ENCODE measurements at regions of chr5 and their contacts with region 1.

Region 1: DNA sequence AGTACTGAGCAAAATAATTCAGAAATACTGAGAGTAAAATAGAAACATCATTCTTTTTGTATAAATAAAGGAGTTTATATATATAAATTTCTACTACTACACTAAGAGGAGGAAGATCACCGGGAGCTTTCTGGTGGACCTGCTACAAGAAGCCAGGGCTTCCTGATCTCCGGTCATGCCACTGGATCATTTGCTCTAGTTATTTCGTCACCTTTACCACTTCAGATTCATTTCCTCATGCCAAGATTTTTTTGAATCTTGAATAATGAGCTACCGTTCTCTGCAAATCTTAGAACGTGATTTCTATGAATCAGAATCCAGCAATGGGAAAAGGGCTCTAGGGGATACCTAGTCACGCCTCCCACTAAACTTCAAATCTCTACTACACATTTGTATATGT is 51.9 kb upstream of the TBC1D9B start:
- DNase-seq: no peak
- H3K4me3 ChIP-seq: no peak overlapping the region
- H3K27ac ChIP-seq: no peak overlapping the region
- H3K4me1 ChIP-seq: no peaks in the 10 kb centered on the region
- H3K27me3 ChIP-seq: no peaks in the 10 kb centered on the region
- CTCF ChIP-seq: no peak
- POLR2A ChIP-seq: no peak

Region 2: GRCh38 chr5:179901915-179902762 is 57.5 kb before region 1 on chr5:
- intact Hi-C with region 1: loop called (anchors 2 kb)
- DNase-seq: no peak
- H3K4me3 ChIP-seq: no peak overlapping the region
- H3K27ac ChIP-seq: peak overlapping the region in 1 of 2 donors; percentile 40
- H3K4me1 ChIP-seq: no peaks in the 10 kb centered on the region
- H3K27me3 ChIP-seq: no peaks in the 10 kb centered on the region
- CTCF ChIP-seq: no peak
- POLR2A ChIP-seq: no peak

Region 3: DNA sequence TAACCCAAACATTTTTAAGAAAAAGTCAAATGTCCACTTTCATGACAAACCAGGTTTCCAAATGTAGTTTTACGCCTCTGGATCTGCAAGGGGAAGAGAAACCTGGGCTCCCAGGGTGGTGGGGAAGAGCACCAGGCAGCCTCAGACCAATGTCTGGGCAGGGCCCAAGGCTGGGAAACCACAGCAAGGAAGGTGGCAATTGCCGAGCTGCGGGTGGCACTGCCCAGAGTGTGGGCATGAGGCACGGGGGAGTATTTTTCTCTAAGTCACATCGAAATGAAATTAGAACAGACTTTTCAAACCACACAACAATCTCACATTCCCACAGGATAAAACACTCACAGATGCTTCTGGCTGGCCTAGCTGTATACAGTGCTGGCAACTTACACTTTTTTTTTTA is 282.0 kb after region 1 on chr5:
- intact Hi-C with region 1: no loop called
- DNase-seq: no peak
- H3K4me3 ChIP-seq: no peak overlapping the region
- H3K27ac ChIP-seq: no peak overlapping the region
- H3K4me1 ChIP-seq: no peaks in the 10 kb centered on the region
- H3K27me3 ChIP-seq: no peaks in the 10 kb centered on the region
- CTCF ChIP-seq: no peak
- POLR2A ChIP-seq: no peak

Measured in breast epithelium (tissue), 4 donors.